Dorsolateral prefrontal cortex (tissue), 120 donors: ENCODE measurements at regions of chr3 and their contacts with region 1.

Region 1: DNA sequence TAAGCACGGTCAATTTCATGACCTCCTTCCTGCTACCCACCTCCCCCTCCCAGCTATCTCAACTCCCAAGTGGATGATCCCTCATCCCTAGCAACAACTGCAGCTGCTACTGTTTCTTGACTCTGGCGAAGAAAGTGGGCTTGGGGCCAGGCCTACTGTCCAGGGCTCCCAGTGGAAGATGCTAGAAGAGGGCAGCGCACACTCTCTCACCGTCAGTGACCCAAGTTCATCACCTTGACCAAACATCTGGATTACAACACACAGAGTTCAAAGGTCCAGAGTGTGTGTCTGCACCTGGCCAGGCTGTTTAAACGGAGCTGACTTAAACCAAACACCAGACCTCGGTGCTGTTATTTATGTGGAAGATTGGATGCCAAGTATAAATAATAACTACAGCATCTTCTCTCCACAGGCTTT is 385.6 kb downstream of the SHQ1 start:
- DNase-seq: no peak
- H3K4me3 ChIP-seq: no peak overlapping the region
- H3K27ac ChIP-seq: no peak overlapping the region
- H3K27me3 ChIP-seq: no peaks in the 10 kb centered on the region
- CTCF ChIP-seq: no peak

Region 2: GRCh38 chr3:72473156-72473555 is 10.6 kb after region 1 on chr3:
- intact Hi-C with region 1: no loop called
- DNase-seq: no peak
- H3K4me3 ChIP-seq: no peak overlapping the region
- H3K27ac ChIP-seq: no peak overlapping the region
- H3K27me3 ChIP-seq: peaks cover 0 to 5% (median 0%) of the 10 kb centered on the region in 45 donors
- CTCF ChIP-seq: no peak

Region 3: GRCh38 chr3:72517921-72518424 is 55.4 kb after region 1 on chr3:
- intact Hi-C with region 1: loop called in 1 of 2 experiments (anchors 10 kb)
- DNase-seq: no peak
- H3K4me3 ChIP-seq: no peak overlapping the region
- H3K27ac ChIP-seq: no peak overlapping the region
- H3K27me3 ChIP-seq: no peaks in the 10 kb centered on the region
- CTCF ChIP-seq: no peak

Region 4: GRCh38 chr3:72601060-72601459 is 138.5 kb after region 1 on chr3:
- intact Hi-C with region 1: loop called in 1 of 2 experiments (anchors 10 kb)
- DNase-seq: peak in 1 of 10 donors; percentile 14
- H3K4me3 ChIP-seq: no peak overlapping the region
- H3K27ac ChIP-seq: peak overlapping the region in 41 of 59 donors; percentile 1 to 76 (median 44)
- H3K27me3 ChIP-seq: no peaks in the 10 kb centered on the region
- CTCF ChIP-seq: no peak

Region 5: DNA sequence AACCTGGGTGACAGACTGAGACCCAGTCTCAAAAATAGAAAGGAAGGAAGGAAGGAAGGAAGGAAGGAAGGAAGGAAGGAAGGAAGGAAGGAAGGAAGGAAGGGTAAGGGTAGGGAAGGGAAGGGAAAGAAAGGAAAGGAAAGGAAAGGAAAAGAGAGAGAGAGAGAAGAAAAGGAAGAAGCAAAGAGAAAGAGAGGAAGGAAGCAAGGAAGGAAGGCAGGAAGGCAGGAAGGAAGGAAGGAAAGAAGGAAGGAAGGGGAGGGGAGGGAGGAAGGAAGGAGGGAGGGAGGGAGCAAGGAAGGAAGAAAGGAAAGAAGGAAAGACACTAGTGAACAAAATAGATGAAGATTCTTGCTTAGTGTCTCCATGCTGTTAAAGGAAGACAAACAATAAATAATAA is 256.5 kb after region 1 on chr3:
- intact Hi-C with region 1: no loop called
- DNase-seq: no peak
- H3K4me3 ChIP-seq: no peak overlapping the region
- H3K27ac ChIP-seq: no peak overlapping the region
- H3K27me3 ChIP-seq: no peaks in the 10 kb centered on the region
- CTCF ChIP-seq: no peak